Activated T-helper 2 cell treated with anti-CD3 and anti-CD28 coated beads, Interferon-gamma antibody, Interleukin-2, Interleukin-4, amounts not matched to agents 10 μg/mL and 5 μg/mL and 100 μg/mL, durations not matched to agents 14 hours and 24 hours and 36 hours (primary cell): ENCODE measurements at regions of chr3 and their contacts with region 1.

Region 1: DNA sequence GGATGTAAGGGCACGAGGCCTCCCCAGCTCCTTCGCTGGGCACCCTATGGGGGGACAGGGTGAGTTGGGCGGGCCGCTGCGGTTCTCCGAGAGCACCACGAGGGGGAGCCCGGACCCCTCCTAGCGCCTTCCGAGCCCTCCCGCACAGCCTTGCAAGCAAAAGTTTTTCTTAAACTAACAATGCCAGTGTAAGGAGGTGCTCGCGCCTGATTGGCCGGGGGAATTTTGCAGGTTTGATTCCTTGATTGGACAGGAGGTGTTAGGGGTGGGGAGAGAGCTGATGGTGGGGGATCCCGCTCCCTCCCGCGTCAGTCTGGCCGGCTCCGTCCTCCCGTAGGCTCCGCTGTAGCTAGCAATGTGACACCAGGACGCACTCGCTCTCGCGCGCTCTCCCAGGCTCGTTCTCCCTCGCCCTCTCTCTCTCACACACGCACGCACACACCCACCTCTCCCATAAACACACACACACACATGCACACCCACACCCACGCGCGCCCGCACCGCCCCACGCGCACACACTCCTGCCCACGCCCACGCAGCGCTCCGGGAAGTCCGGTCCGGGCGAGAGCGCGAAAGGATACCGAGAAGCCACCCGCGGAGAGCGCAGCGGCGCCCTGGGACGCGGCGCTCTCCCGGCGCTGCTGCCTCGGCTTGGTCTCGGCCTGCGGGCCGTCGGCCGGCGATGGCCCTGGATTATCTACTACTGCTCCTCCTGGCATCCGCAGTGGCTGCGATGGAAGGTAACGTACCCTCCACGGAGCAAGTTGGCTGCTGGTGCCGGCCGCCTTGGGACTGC is at the start of gene EPHB1:
- DNase-seq: peak; percentile 63
- H3K4me3 Mint-ChIP-seq: peak within 1 kb of the TSS; percentile 81
- H3K27ac Mint-ChIP-seq: peak within 1 kb of the TSS; percentile 46
- H3K4me1 Mint-ChIP-seq: peaks cover 8% of the 10 kb centered on the region
- H3K27me3 Mint-ChIP-seq: peaks cover 55% of the 10 kb centered on the region
- total RNA-seq, gene EPHB1: 0.71 and 1.5 TPM in 2 replicates

Region 2: DNA sequence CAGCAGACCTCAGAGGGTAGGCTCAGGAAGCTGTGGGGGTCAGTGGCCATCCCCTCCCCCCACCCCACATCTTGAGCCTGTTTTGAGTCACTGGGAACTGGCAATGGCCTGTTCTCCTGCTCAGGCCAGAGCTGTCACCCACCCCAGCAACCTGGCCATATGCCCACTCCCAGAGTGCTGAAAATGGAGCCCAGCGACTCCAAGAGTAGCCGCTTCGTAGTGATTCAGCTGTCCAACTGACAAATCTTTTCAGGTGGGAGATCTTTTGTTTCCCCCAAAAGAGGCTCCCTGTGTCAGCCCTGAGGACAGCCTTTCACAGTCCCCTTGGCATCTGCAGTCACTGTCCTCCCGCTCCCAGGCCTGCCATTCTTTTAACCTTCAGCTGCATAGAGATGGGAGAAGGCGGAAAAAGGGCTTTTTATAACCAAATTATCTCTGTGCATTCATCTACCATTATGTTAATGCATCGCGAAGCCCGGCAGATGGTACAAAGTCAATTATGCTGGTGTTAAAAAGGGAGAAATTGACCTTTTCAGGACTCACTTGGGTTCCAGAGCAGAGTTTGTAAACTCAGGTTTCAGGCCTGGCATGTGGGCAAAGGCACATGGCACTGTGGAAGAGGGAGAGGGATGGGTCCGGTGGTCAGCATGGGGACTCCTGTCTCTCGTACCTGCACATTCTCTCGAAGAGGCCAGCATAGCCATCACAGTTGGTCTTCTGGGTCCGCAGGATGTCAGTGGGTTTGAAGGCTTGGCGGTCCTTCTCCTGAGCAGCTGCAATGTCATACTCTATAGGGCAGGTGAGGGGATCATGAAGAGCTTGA is 176.5 kb before region 1 on chr3:
- intact Hi-C with region 1: no loop called
- DNase-seq: no peak
- H3K4me3 Mint-ChIP-seq: no peak overlapping the region
- H3K27ac Mint-ChIP-seq: no peak overlapping the region
- H3K4me1 Mint-ChIP-seq: no peaks in the 10 kb centered on the region
- H3K27me3 Mint-ChIP-seq: no peaks in the 10 kb centered on the region

Region 3: GRCh38 chr3:134838599-134838998 is 43.5 kb after region 1 on chr3:
- intact Hi-C with region 1: loop called (anchors 1 kb)
- DNase-seq: no peak
- H3K4me3 Mint-ChIP-seq: no peak overlapping the region
- H3K27ac Mint-ChIP-seq: no peak overlapping the region
- H3K4me1 Mint-ChIP-seq: no peaks in the 10 kb centered on the region
- H3K27me3 Mint-ChIP-seq: peaks cover 9% of the 10 kb centered on the region

Region 4: GRCh38 chr3:135503760-135504686 is 708.9 kb after region 1 on chr3:
- intact Hi-C with region 1: loop called (anchors 10 kb)
- DNase-seq: peak; percentile 12
- H3K4me3 Mint-ChIP-seq: no peak overlapping the region
- H3K27ac Mint-ChIP-seq: no peak overlapping the region
- H3K4me1 Mint-ChIP-seq: no peaks in the 10 kb centered on the region
- H3K27me3 Mint-ChIP-seq: no peaks in the 10 kb centered on the region

Region 5: GRCh38 chr3:135895106-135895733 is 1100.1 kb after region 1 on chr3:
- intact Hi-C with region 1: loop called (anchors 2 kb)
- DNase-seq: peak; percentile 10
- H3K4me3 Mint-ChIP-seq: no peak overlapping the region
- H3K27ac Mint-ChIP-seq: no peak overlapping the region
- H3K4me1 Mint-ChIP-seq: no peaks in the 10 kb centered on the region
- H3K27me3 Mint-ChIP-seq: no peaks in the 10 kb centered on the region